Activated CD4-positive, alpha-beta memory T cell treated with anti-CD3 and anti-CD28 coated beads, Interleukin-2, amount 10 ng/mL, durations not matched to agents 7 days and 5 days (primary cell): ENCODE measurements at regions of chr10 and their contacts with region 1.

Region 1: DNA sequence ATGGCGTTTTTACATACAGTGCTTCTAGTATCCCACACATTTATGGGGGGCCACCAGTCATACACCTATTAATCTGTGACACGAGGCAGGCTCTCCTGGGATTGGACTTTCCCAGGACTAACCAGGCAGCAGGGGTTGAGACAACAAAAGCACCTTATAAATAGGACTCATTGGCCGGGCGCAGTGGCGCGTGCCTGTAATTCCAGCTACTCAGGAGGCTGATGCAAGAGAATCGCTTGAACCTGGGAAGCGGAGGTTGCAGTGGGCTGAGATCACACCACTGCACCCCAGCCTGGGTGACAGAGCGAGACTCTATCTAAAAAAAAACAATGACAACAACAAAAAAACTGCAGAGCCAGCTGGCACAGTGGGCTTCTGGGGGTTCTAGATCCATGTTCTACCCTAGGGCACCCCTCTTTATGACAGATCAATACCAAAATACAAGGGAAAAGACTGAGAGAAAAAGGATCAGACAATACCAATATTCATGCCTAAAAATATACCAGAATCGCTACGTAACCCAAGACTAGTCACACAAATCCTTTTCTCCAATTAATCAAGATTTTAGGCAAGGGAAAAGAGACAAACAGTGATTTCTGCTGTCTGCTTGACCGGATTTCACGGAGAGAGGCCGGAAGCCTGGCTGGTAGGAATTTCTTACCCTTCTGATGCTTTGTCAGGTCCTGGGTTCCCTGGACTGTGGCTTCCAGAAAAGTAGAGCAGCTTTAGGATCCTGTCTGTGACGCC is 98.4 kb upstream of the CCNY start:
- DNase-seq: no peak
- H3K4me3 Mint-ChIP-seq: no peak overlapping the region
- H3K27ac Mint-ChIP-seq: no peak overlapping the region
- H3K4me1 Mint-ChIP-seq: no peaks in the 10 kb centered on the region
- H3K27me3 Mint-ChIP-seq: no peaks in the 10 kb centered on the region

Region 2: GRCh38 chr10:35136263-35136815 is 101.6 kb before region 1 on chr10:
- CTCF ChIA-PET with region 1: no interaction called
- POLR2A ChIA-PET with region 1: no interaction called
- DNase-seq: no peak
- H3K4me3 Mint-ChIP-seq: peak overlapping the region; percentile 62
- H3K27ac Mint-ChIP-seq: peak overlapping the region; percentile 85
- H3K4me1 Mint-ChIP-seq: peaks cover 53% of the 10 kb centered on the region
- H3K27me3 Mint-ChIP-seq: no peaks in the 10 kb centered on the region

Region 3: DNA sequence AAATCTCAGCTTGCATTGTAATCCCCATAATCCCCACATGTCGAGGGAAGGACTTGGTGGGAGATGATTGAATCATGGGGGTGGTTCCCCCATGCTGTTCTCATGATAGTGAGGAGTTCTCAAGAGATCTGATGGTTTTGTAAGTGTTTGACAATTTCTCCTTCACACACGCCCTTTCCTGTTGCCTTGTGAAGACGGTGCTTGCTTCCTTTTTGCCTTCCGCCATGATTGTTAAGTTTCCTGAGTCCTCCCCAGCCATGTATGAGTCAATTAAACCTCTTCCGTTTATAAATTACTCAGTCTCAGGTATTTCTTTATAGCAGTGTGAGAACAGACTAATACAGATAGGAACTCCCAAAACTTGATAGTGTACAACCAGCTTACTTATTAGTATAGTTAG is 12.7 kb before region 1 on chr10:
- CTCF ChIA-PET with region 1: interaction called, 15 read pairs
- POLR2A ChIA-PET with region 1: no interaction called
- DNase-seq: no peak
- H3K4me3 Mint-ChIP-seq: no peak overlapping the region
- H3K27ac Mint-ChIP-seq: peak overlapping the region; percentile 48
- H3K4me1 Mint-ChIP-seq: peaks cover 14% of the 10 kb centered on the region
- H3K27me3 Mint-ChIP-seq: no peaks in the 10 kb centered on the region

Region 4: DNA sequence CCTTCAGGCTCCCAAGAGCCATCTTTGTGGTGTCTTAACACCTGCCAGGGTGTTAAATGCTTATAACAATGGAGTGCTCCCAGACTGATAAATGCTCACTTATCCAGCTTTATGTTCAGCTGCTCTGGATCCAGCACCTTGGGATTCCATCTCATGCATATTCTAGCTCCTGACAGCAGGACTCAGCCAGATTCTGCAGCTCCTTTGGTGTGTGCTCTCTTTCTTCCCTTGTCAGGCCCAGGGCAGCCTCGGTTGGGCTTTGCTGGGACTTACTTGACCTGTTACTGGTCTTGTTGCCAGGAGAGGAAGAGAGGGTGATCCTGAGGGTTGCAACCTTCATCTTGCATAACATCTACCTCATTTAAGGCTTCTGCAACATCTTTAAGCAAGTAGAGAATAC is 39.0 kb after region 1 on chr10:
- CTCF ChIA-PET with region 1: no interaction called
- POLR2A ChIA-PET with region 1: no interaction called
- DNase-seq: no peak
- H3K4me3 Mint-ChIP-seq: no peak overlapping the region
- H3K27ac Mint-ChIP-seq: no peak overlapping the region
- H3K4me1 Mint-ChIP-seq: no peaks in the 10 kb centered on the region
- H3K27me3 Mint-ChIP-seq: no peaks in the 10 kb centered on the region

Region 5: DNA sequence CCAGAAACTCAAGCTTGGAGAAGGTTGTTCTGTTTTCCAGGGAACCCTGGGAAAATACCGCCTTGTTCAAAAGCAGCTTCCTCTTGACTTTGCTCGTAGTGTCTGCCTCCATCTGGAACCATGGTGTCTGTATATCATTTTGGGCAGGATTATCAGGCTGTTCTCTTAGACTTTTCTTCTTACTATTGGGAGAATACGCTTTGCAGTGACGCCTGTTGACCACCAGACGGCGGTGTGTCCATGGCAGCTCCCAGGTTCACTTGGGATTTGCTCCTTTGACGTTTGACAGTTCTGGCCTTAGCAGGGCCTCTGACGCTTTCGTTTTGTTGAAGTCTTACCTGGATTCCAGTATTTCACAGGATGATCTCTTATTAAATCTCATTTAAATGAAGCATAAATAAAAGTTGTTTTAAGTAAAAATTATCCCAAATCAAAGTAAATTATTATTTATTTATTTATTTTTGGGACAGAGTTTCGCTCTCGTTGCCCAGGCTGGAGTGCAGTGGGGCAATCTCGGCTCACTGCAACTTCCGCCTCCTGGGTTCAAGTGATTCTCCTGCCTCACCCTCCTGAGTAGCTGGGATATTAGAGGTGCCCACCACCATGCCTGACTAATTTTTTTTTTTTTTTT is 325.4 kb after region 1 on chr10:
- CTCF ChIA-PET with region 1: interaction called, 13 read pairs
- POLR2A ChIA-PET with region 1: no interaction called
- DNase-seq: peak; percentile 45
- H3K4me3 Mint-ChIP-seq: no peak overlapping the region
- H3K27ac Mint-ChIP-seq: no peak overlapping the region
- H3K4me1 Mint-ChIP-seq: peaks cover 5% of the 10 kb centered on the region
- H3K27me3 Mint-ChIP-seq: no peaks in the 10 kb centered on the region